ENCODE measurements at regions of chr4 and their contacts with region 1.

Region 1: GRCh38 chr4:3201718-3202702 is 46.9 kb upstream of the MSANTD1 start:
- DNase-seq: peak; percentile 36 to 92 (median 77)
- ATAC-seq: peak; percentile 95
- H3K4me3 ChIP-seq: peak overlapping the region; percentile 10 to 31
- H3K4me3 Mint-ChIP-seq: peak overlapping the region; percentile 70
- H3K27ac ChIP-seq: peak overlapping the region in 1 of 2 experiments; percentile 81
- H3K27ac Mint-ChIP-seq: peak overlapping the region; percentile 74
- H3K4me1 ChIP-seq: peaks cover 43% of the 10 kb centered on the region
- H3K4me1 Mint-ChIP-seq: peaks cover 56% of the 10 kb centered on the region
- H3K27me3 ChIP-seq: no peaks in the 10 kb centered on the region
- H3K27me3 Mint-ChIP-seq: no peaks in the 10 kb centered on the region
- CTCF ChIP-seq: no peak

Region 2: GRCh38 chr4:2923141-2923551 is 278.9 kb before region 1 on chr4:
- CTCF ChIA-PET with region 1: no interaction called
- POLR2A ChIA-PET with region 1: no interaction called
- intact Hi-C with region 1: no loop called
- DNase-seq: peak in 1 of 9 experiments; percentile 59
- ATAC-seq: peak; percentile 26
- H3K4me3 ChIP-seq: no peak overlapping the region
- H3K4me3 Mint-ChIP-seq: peak overlapping the region; percentile 35
- H3K27ac ChIP-seq: peak overlapping the region in 1 of 2 experiments; percentile 70
- H3K27ac Mint-ChIP-seq: peak overlapping the region; percentile 89
- H3K4me1 ChIP-seq: peaks cover 22% of the 10 kb centered on the region
- H3K4me1 Mint-ChIP-seq: peaks cover 44% of the 10 kb centered on the region
- H3K27me3 ChIP-seq: no peaks in the 10 kb centered on the region
- H3K27me3 Mint-ChIP-seq: no peaks in the 10 kb centered on the region
- CTCF ChIP-seq: no peak

Region 3: DNA sequence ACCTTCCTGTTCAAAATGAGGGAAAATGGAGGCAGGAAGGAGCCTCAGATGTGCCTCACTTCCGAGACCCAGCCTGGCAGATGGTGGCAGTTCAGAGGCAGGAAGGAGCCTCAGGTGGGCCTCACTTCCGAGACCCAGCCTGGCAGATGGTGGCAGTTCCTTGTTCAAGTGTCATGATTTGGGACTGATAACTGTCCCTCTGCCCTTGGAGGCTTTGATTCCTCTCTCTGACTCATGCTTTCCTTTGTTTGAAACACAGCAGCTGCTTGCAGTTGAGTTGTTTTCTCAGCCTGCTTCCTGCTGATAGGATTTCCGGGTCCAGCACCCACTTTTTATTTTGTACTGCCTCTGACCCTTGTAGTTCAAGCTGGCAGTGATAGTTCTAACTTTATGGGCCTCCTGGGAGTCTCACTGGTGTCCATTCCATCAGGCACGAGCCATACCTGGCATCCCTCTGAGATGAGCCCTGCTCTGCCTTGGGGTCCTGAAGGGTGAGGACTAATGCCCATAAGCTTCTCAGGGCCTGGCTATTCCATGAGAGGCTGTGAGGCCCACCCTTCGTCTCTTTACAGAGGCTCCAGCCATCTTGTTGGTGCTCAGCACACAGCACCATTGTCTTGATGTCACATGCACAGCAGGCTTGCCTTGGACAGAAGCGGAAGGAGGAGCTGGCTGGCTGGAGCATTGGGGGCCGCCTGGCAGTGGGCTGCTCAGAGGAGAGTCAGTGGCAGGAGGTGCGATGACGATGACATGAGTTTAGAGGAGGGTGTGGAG is 103.8 kb after region 1 on chr4:
- CTCF ChIA-PET with region 1: no interaction called
- POLR2A ChIA-PET with region 1: no interaction called
- intact Hi-C with region 1: loop called (anchors 1 to 2 kb)
- DNase-seq: peak in 2 of 9 experiments; percentile 38 to 45
- ATAC-seq: no peak
- H3K4me3 ChIP-seq: peak overlapping the region in 1 of 2 experiments; percentile 5
- H3K4me3 Mint-ChIP-seq: no peak overlapping the region
- H3K27ac ChIP-seq: no peak overlapping the region
- H3K27ac Mint-ChIP-seq: peak overlapping the region; percentile 64
- H3K4me1 ChIP-seq: peaks cover 48% of the 10 kb centered on the region
- H3K4me1 Mint-ChIP-seq: peaks cover 56% of the 10 kb centered on the region
- H3K27me3 ChIP-seq: peaks cover 0 to 2% of the 10 kb centered on the region in 2 experiments
- H3K27me3 Mint-ChIP-seq: peaks cover 17% of the 10 kb centered on the region
- CTCF ChIP-seq: no peak

Measured in CD8-positive, alpha-beta T cell (primary cell).